Aorta (tissue), 5 donors: ENCODE measurements at regions of chr16 and their contacts with region 1.

Region 1: DNA sequence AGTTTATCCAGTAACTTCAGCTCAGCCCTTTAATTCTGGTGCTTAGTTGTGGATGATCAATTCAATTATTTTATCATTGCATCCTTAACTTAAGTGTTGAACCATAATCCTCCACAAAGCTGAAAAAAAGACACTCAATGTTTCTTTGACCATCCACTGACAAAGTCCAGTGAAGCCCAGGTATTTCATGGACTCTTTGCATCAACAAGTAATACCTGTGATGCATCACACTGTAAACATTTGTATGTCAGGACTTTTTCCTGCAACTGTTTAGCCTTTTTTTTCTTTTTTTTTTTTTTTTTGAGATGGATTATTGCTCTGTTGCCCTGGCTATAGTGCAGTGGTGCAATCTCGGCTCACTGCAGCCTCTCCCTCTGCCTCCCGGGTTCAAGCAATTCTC is 6.6 kb upstream of the NFAT5 start:
- DNase-seq: no peak
- ATAC-seq: no peak
- H3K4me3 ChIP-seq: no peak overlapping the region
- H3K27ac ChIP-seq: no peak overlapping the region
- H3K4me1 ChIP-seq: no peaks in the 10 kb centered on the region
- H3K27me3 ChIP-seq: no peaks in the 10 kb centered on the region

Region 2: DNA sequence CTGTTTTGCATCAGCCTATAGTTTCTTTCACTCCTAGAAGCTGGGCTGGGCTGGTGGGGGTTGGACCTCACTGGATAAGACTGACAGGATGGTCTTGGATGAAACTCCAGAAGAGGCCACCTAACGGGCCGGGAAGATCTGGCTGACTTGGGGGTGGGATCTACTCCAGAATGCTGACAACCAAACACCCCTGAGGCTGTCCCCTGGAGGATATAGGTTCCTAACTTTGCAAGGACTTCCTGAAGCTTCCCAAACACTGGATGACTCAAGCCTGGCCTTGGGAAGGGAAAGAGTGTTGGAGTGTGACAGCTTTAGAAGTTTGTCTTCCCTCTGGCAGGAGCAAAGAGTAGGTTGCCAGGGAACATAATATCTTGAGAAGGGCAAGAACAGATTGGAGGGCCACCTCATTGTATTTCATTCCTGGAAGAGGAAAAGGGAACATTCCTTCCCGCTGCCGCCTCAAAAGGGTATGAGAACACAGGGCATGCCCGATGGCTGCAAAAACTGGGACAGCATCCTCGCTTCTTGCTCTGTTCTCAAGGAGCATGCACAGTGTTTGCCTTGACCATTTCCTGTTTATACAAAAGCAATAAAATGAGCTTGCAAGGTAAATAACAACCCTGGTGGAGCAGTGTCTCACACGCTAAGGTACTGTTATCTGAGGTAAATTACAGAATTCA is 141.5 kb before region 1 on chr16:
- intact Hi-C with region 1: no loop called
- DNase-seq: no peak
- ATAC-seq: peak; percentile 38
- H3K4me3 ChIP-seq: no peak overlapping the region
- H3K27ac ChIP-seq: no peak overlapping the region
- H3K4me1 ChIP-seq: no peaks in the 10 kb centered on the region
- H3K27me3 ChIP-seq: no peaks in the 10 kb centered on the region

Region 3: GRCh38 chr16:69535123-69536050 is 23.8 kb before region 1 on chr16:
- intact Hi-C with region 1: loop called in 1 of 2 experiments (anchors 2 kb)
- DNase-seq: no peak
- ATAC-seq: no peak
- H3K4me3 ChIP-seq: no peak overlapping the region
- H3K27ac ChIP-seq: no peak overlapping the region
- H3K4me1 ChIP-seq: no peaks in the 10 kb centered on the region
- H3K27me3 ChIP-seq: no peaks in the 10 kb centered on the region

Region 4: GRCh38 chr16:69632836-69633235 is 73.7 kb after region 1 on chr16:
- intact Hi-C with region 1: no loop called
- DNase-seq: no peak
- ATAC-seq: no peak
- H3K4me3 ChIP-seq: no peak overlapping the region
- H3K27ac ChIP-seq: no peak overlapping the region
- H3K4me1 ChIP-seq: no peaks in the 10 kb centered on the region
- H3K27me3 ChIP-seq: no peaks in the 10 kb centered on the region